Activated CD4-positive, alpha-beta T cell treated with anti-CD3 and anti-CD28 coated beads, Interleukin-2, amount 10 ng/mL, durations not matched to agents 24 days and 14 days (primary cell): ENCODE measurements at regions of chr5 and their contacts with region 1.

Region 1: DNA sequence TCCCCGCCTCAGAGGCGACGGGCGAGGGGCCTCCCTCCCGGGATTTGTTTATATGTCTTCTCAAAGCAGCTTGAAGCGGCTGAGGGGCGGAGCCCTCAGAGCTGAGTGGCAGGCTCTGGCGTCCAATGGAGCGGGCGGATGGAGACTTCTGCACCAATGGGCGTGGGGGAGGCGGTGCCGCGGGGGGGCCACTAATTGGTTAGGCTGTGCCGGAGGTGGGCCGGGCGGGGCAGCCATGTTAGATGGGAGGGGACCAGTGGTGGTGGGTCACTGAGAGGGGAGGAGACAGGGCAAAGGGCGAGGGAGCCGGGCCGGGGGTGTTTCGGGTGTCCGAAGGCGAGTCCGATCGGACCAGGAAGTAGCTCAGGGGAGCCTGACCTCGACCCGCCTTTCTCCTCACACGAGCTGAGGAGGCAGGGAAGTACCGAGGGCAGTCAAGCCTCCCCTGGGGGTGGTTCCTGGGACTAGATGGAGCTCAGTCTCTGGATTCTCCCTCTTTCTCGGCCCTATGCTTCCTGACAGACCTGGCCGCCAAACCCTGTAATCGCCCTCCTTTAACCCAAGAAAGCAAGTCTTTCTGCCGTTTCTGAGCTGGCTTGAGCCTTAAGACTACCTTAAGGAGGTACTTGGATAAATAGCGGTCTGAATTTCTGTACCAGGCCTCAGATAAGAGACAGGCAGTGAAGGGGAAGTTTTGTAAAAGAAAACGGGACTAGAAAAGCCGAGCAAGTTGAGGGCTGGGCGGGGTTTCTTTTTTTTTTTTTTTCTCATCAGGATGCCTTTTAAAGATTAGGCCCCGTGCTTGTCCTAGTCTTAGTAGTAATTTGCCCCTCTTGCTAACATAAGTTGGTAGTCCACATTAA is 1.1 kb downstream of the CREBRF start:
- DNase-seq: peak; percentile 100
- H3K4me3 Mint-ChIP-seq: peak overlapping the region; percentile 95
- H3K27ac Mint-ChIP-seq: peak overlapping the region; percentile 96
- H3K4me1 Mint-ChIP-seq: peaks cover 24% of the 10 kb centered on the region
- H3K27me3 Mint-ChIP-seq: no peaks in the 10 kb centered on the region

Region 2: GRCh38 chr5:171387345-171387969 is 1669.8 kb before region 1 on chr5 and contains the start of gene NPM1:
- intact Hi-C with region 1: loop called (anchors 2 kb)
- DNase-seq: peak; percentile 99
- H3K4me3 Mint-ChIP-seq: peak within 1 kb of the TSS; percentile 94
- H3K27ac Mint-ChIP-seq: peak within 1 kb of the TSS; percentile 100
- H3K4me1 Mint-ChIP-seq: peaks cover 41% of the 10 kb centered on the region
- H3K27me3 Mint-ChIP-seq: peaks cover 10% of the 10 kb centered on the region
- total RNA-seq, gene NPM1: 3,066 and 3,162 TPM in 2 replicates

Region 3: DNA sequence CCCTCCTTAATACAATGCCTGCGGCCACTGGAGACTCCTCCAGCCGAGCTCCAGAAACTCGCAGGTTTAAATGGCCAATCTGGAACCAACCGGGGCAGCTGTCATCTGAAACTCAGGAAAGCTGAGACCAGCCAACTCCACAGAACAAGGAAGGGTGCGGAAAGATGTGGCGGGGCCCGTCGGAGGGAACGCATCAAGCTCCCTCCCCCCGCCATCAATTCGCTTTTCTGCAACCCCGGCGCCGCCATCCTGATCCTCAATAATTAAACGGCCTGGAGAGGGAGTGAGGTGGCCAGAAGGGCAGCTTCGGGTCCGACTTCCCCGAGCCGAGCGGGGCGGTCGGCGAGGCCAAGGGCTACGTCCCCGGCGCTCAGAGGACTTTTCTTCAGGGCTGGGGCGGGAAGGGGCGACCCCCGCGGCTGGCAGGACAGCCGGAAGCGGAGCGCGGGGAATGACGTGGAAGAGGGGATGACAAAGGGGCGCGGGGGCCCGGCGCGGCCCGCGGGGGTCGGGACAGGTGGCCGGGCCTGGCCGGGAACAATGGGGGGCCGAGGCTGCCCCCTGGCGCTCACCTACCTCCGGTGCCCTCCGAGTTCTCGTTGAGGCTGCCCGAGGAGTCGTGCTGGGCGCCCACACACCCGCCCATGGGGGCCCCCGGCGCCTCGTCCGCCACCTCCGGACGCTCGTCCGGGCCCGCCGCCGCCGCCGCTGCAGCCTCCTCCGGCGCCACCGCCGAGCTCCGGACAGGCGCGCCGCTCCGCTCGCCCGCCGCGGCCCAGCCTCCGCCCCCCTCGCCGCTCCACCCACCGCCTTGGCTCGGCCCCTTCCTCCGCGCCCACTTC is 774.1 kb before region 1 on chr5 and contains the start of gene UBTD2:
- intact Hi-C with region 1: loop called (anchors 10 kb)
- DNase-seq: peak; percentile 95
- H3K4me3 Mint-ChIP-seq: peak within 1 kb of the TSS; percentile 89
- H3K27ac Mint-ChIP-seq: peak within 1 kb of the TSS; percentile 81
- H3K4me1 Mint-ChIP-seq: peaks cover 23% of the 10 kb centered on the region
- H3K27me3 Mint-ChIP-seq: peaks cover 25% of the 10 kb centered on the region
- total RNA-seq, gene UBTD2: 5.5 and 6.3 TPM in 2 replicates

Region 4: GRCh38 chr5:172429201-172429940 is 627.9 kb before region 1 on chr5:
- intact Hi-C with region 1: no loop called
- DNase-seq: no peak
- H3K4me3 Mint-ChIP-seq: no peak overlapping the region
- H3K27ac Mint-ChIP-seq: no peak overlapping the region
- H3K4me1 Mint-ChIP-seq: no peaks in the 10 kb centered on the region
- H3K27me3 Mint-ChIP-seq: peaks cover 3% of the 10 kb centered on the region

Region 5: DNA sequence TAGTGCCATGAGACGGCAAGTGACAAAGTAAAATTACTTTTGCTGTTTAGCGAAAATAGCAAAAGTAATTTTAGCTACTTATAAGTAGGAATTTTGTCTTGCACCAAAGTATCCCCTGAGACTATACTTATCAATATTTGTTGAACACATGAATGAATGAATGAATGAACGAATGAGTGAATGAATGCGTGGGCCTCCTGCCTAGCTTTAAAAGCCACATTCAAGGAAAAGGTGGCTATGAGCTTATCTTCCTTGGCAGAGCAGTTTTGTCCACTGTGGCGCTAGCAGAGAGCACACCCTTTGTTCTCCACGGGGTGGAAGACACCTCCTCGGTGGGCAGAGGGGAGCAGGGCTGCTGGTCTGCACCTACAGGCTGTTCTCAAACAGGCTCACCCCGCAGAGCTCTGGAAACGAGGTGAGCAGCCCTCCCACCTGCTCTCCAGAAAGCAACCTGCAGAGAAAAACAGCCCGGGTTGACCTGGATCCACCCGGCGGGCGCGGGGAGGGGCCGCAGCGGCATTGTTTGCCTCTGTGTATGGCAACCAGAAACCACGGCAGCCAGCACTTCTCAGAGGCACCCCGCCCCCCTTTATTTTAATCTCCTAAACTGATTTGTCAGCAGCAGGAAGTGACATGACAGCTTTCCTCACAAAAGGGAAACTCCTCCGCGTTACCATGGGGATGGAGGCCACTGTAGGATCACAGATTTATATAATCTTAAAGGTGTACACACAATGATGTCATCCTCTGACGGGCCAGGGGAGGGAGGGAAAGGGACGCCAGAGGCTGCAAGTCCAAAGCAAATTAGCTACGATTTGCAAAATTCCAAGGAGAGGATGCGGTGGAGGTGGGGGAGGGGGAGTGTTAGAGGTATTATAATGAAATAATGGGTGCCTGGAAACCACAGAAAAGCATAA is 292.2 kb before region 1 on chr5:
- intact Hi-C with region 1: loop called (anchors 2 kb)
- DNase-seq: peak; percentile 99
- H3K4me3 Mint-ChIP-seq: peak overlapping the region; percentile 79
- H3K27ac Mint-ChIP-seq: peak overlapping the region; percentile 91
- H3K4me1 Mint-ChIP-seq: peaks cover 26% of the 10 kb centered on the region
- H3K27me3 Mint-ChIP-seq: peaks cover 5% of the 10 kb centered on the region

Region 6: DNA sequence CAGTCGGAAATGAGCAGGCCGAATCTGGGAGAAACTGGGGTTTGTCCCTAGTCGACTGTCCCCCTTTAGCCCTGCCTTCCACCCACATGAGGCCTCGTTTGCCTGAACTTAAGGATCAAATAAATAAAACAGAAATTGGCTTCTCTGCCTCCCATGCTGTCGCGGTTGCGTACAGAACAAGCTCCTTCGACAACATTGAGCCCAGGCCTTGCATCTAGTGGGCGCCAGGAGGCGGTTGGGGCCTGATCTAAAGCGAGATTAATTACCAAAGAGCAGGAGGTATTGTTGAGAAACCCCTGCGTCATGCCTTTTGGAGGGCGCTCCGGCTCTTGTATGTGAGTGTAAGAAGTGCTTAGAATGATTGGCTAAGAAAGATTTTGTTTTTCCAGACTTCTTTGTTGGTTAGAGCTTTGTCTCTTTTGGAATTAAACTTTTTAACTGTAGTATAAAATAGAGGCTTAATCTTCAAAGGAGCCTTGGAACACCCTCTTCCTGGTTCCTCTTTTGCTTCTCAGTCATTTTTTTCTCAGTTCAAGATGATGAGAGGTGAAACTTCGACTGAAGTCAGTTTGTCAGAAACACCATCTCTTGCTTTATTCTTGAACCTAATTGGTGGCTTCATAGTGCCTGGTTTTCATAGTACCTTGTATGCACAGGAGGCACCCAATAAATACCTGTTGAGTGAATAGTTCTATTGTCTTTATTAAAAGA is 72.9 kb before region 1 on chr5:
- intact Hi-C with region 1: loop called (anchors 1 kb)
- DNase-seq: peak; percentile 90
- H3K4me3 Mint-ChIP-seq: peak overlapping the region; percentile 98
- H3K27ac Mint-ChIP-seq: peak overlapping the region; percentile 99
- H3K4me1 Mint-ChIP-seq: peaks cover 20% of the 10 kb centered on the region
- H3K27me3 Mint-ChIP-seq: no peaks in the 10 kb centered on the region

Region 7: GRCh38 chr5:173331956-173332479 is 274.7 kb after region 1 on chr5:
- intact Hi-C with region 1: loop called (anchors 1 kb)
- DNase-seq: peak; percentile 98
- H3K4me3 Mint-ChIP-seq: peak overlapping the region; percentile 43
- H3K27ac Mint-ChIP-seq: peak overlapping the region; percentile 84
- H3K4me1 Mint-ChIP-seq: peaks cover 22% of the 10 kb centered on the region
- H3K27me3 Mint-ChIP-seq: peaks cover 5% of the 10 kb centered on the region